ENCODE measurements at regions of chr14 and their contacts with region 1.

Region 1: DNA sequence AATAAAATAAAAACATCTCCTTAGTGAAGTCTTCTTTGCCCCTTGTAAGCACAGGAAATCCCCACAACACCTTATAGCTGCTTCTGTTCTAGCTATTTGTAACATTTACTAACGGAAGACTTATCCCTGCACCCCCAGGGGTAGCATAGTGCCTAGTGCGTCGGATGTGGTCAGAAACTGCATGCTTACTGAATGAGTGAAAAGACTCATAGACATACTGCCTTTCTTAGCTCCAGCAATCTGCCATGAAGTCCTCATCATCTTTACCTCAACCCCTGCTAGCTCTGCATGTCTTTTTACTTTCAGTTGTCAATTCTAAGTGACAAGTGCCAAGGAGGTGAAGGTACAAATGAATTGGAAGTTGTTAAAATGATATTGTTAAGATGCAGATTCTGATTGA is 12.9 kb downstream of the RIOX1 start:
- DNase-seq: no peak
- ATAC-seq: no peak
- H3K4me3 ChIP-seq: no peak overlapping the region
- H3K27ac ChIP-seq: no peak overlapping the region
- H3K4me1 ChIP-seq: peaks cover 0 to 6% of the 10 kb centered on the region in 2 experiments; a peak in 1 of 4 replicates
- H3K27me3 ChIP-seq: no peaks in the 10 kb centered on the region
- CTCF ChIP-seq: no peak
- POLR2A ChIP-seq: no peak
- RAD21 ChIP-seq: no peak

Region 2: GRCh38 chr14:73458151-73458976 is 45.3 kb before region 1 on chr14 and contains the start of gene NUMB:
- CTCF ChIA-PET with region 1: no interaction called
- POLR2A ChIA-PET with region 1: no interaction called
- RAD21 ChIA-PET with region 1: no interaction called
- intact Hi-C with region 1: no loop called
- DNase-seq: peak; percentile 100
- ATAC-seq: peak; percentile 96
- H3K4me3 ChIP-seq: peak within 1 kb of the TSS; percentile 88 to 90
- H3K27ac ChIP-seq: peak within 1 kb of the TSS; percentile 62
- H3K4me1 ChIP-seq: peaks cover 6 to 19% of the 10 kb centered on the region in 2 experiments; a peak in 3 of 4 replicates
- H3K27me3 ChIP-seq: no peaks in the 10 kb centered on the region
- CTCF ChIP-seq: no peak
- POLR2A ChIP-seq: peak; percentile 85
- RAD21 ChIP-seq: no peak
- total RNA-seq, gene NUMB: 43.0 TPM

Region 3: GRCh38 chr14:73564889-73565288 is 61.2 kb after region 1 on chr14:
- CTCF ChIA-PET with region 1: no interaction called
- POLR2A ChIA-PET with region 1: no interaction called
- RAD21 ChIA-PET with region 1: no interaction called
- intact Hi-C with region 1: no loop called
- DNase-seq: no peak
- ATAC-seq: no peak
- H3K4me3 ChIP-seq: no peak overlapping the region
- H3K27ac ChIP-seq: no peak overlapping the region
- H3K4me1 ChIP-seq: no peaks in the 10 kb centered on the region
- H3K27me3 ChIP-seq: no peaks in the 10 kb centered on the region
- CTCF ChIP-seq: no peak
- POLR2A ChIP-seq: no peak
- RAD21 ChIP-seq: no peak

Region 4: DNA sequence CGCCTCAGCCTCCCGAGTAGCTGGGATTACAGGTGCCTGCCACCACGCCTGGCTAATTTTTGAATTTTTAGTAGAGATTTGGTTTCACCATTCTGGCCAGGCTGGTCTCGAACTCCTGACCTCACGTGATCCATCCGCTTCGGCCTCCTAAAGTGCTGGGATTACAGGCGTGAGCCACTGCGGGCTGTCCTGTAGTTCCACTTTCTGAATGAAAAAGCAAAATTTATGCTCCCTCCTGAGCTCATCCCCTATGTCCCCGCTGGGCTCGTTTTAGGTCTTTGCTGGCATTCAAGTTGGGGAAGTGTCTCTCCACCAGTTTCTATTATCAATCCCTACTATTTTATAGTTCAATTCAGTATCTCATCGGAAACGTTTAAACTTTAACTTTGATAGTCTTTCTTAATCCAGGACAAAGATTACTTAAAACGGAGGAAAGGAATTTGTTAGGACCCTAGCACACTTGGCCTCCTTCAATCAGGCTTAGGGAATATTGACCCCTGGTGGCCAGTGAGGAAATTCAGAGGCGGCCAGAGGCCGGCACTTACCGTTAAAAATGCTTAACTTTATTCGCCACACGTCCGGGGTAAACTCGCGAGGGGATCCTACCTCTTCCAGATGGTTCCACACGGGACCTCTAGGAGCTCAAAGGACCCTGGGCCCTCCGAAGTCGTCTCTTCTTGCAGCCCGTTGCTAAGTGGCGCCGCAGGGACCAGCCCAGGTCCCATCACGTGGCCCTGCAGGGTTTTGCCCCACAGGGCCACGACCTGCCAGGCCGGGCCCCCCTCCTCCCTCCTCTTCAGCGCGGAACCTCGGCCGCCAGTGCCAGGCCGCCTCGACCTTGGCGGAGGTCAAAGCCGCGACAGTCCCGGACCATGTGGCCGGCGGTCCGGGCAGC is 129.7 kb after region 1 on chr14:
- CTCF ChIA-PET with region 1: interaction called, 15 read pairs
- POLR2A ChIA-PET with region 1: no interaction called
- RAD21 ChIA-PET with region 1: no interaction called
- intact Hi-C with region 1: loop called (anchors 1 kb)
- DNase-seq: no peak
- ATAC-seq: peak; percentile 92
- H3K4me3 ChIP-seq: peak overlapping the region in 1 of 2 experiments; percentile 11; a peak in 1 of 4 replicates
- H3K27ac ChIP-seq: no peak overlapping the region
- H3K4me1 ChIP-seq: peaks cover 0 to 8% of the 10 kb centered on the region in 2 experiments; a peak in 1 of 4 replicates
- H3K27me3 ChIP-seq: no peaks in the 10 kb centered on the region
- CTCF ChIP-seq: peak; percentile 79 to 86 (median 81)
- POLR2A ChIP-seq: no peak
- RAD21 ChIP-seq: peak; percentile 80